ENCODE measurements at regions of chr5 and their contacts with region 1.

Region 1: DNA sequence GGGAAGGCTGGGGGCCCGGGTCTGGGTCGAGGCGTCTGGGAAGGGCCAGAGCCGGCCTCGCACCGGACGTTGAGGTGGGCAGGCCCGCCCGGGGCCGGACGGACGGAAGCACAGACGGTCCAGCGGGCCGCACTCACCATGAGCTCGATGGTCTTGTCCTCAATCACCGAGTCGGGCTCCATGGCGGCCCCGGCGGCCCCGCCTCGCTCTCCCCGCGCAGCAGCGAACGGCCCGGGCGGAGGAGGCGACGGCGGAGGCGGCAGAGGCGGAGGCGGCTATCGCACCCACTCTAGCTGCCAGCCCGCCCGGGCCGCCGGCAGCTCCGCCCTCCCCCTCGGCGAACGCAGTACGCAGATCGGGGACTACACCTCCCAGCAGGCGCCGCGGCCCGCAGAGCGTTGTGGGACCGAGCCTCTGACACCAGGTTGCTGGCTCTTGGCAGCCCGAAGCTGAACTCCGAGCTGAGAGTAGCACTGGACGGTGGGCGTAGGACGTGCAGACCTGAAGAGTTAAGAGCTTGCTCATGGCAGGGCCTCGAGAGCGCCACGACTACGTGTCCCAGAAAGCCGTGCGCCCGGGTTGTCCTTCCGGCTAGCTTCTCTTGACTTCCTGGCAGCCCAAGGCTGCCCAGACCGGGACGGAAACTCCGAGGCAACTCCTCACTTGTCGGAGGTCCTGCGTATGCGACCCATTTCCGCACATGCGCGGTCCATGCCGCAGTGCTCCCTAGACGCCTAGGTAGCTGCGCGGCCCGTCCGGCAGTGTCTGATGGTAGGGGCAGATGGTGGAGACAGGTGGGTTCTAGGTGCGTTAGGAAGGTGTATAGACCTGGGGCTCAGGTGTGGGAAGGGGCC is at the start of gene FBXW11:
- DNase-seq: peak; percentile 93
- H3K4me3 Mint-ChIP-seq: peak within 1 kb of the TSS; percentile 95
- H3K27ac Mint-ChIP-seq: peak within 1 kb of the TSS; percentile 95
- H3K4me1 Mint-ChIP-seq: peaks cover 57% of the 10 kb centered on the region
- H3K27me3 Mint-ChIP-seq: no peaks in the 10 kb centered on the region
- total RNA-seq, gene FBXW11: 55.6 and 57.9 TPM in 2 replicates

Region 2: DNA sequence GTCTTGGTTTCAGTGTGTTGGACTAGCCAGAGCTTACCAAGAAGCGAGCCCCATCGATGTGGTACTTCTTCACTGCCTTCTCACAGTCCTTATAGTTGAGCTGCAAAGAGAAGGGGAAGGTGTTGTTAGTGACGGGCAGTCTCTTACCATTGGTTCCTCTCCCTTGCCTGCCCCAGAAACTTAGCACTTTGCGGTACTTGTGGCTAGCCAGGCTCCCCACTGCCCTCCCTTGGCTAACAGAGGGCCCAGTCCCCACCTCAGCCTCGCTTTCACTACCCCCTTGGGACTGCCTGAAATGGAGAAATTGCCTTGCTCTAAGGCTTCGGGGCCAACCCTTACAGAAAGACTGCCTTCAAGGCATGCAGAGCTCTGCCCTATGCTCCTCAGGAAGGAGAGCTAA is 1713.3 kb before region 1 on chr5:
- intact Hi-C with region 1: loop called (anchors 10 kb)
- DNase-seq: no peak
- H3K4me3 Mint-ChIP-seq: peak overlapping the region; percentile 99
- H3K27ac Mint-ChIP-seq: peak overlapping the region; percentile 87
- H3K4me1 Mint-ChIP-seq: peaks cover 79% of the 10 kb centered on the region
- H3K27me3 Mint-ChIP-seq: no peaks in the 10 kb centered on the region

Region 3: GRCh38 chr5:171961117-171961516 is 45.4 kb before region 1 on chr5:
- intact Hi-C with region 1: loop called (anchors 1 kb)
- DNase-seq: no peak
- H3K4me3 Mint-ChIP-seq: peak overlapping the region; percentile 13
- H3K27ac Mint-ChIP-seq: peak overlapping the region; percentile 76
- H3K4me1 Mint-ChIP-seq: peaks cover 81% of the 10 kb centered on the region
- H3K27me3 Mint-ChIP-seq: no peaks in the 10 kb centered on the region

Region 4: GRCh38 chr5:172065501-172065990 is 59.0 kb after region 1 on chr5:
- intact Hi-C with region 1: loop called (anchors 1 kb)
- DNase-seq: no peak
- H3K4me3 Mint-ChIP-seq: no peak overlapping the region
- H3K27ac Mint-ChIP-seq: no peak overlapping the region
- H3K4me1 Mint-ChIP-seq: peaks cover 47% of the 10 kb centered on the region
- H3K27me3 Mint-ChIP-seq: no peaks in the 10 kb centered on the region

Region 5: GRCh38 chr5:172283020-172283861 is 276.7 kb after region 1 on chr5 and contains the start of gene UBTD2:
- intact Hi-C with region 1: loop called (anchors 2 kb)
- DNase-seq: peak; percentile 74
- H3K4me3 Mint-ChIP-seq: peak within 1 kb of the TSS; percentile 87
- H3K27ac Mint-ChIP-seq: peak within 1 kb of the TSS; percentile 73
- H3K4me1 Mint-ChIP-seq: peaks cover 16% of the 10 kb centered on the region
- H3K27me3 Mint-ChIP-seq: peaks cover 30% of the 10 kb centered on the region
- total RNA-seq, gene UBTD2: 5.0 and 6.1 TPM in 2 replicates

Region 6: DNA sequence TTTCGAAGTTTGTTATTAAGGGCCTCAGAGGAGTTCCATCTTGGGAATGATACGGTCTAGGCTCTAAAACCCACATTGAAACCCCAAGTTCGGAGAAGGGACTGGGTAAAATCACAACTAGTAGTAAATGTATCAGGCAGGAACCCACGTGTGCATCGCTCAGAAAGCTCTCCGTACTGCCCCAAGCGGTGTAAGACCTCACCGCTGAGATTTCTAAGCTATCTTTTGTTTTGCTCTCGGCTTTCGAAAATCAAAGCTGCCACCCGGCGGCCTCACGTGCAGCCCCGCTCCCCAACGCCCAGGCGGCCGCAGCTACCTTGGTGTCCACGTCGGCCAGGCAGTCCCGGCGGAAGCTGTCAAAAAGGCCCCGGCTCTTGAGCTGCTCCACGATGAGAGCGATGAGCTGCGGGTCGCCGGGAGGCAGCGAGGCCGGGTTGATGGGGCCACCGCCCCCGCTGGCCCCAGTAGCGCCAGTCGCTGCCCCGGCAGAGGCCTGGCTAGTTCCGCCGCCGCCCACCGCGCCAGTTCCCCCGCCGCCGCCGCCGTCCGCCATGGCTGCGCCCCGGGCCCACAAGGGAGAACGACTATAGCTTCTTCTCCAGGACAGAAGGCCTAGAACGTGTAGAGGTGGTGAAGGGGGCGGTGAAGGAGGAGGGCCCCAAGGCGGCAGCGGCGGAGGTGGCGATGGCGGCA is 1609.5 kb after region 1 on chr5:
- intact Hi-C with region 1: loop called (anchors 5 kb)
- DNase-seq: peak; percentile 65
- H3K4me3 Mint-ChIP-seq: peak overlapping the region; percentile 96
- H3K27ac Mint-ChIP-seq: peak overlapping the region; percentile 88
- H3K4me1 Mint-ChIP-seq: peaks cover 37% of the 10 kb centered on the region
- H3K27me3 Mint-ChIP-seq: no peaks in the 10 kb centered on the region